ENCODE measurements at regions of chr11 and their contacts with region 1.

Region 1: GRCh38 chr11:63838678-63839507 is at the start of gene MARK2:
- DNase-seq: peak; percentile 97 to 99 (median 99)
- H3K4me3 ChIP-seq: peak within 1 kb of the TSS; percentile 68 to 96 (median 90)
- H3K27ac ChIP-seq: peak within 1 kb of the TSS; percentile 83 to 91
- H3K4me1 ChIP-seq: peaks cover 23 to 52% (median 40%) of the 10 kb centered on the region in 4 experiments
- H3K27me3 ChIP-seq: no peaks in the 10 kb centered on the region

Region 2: DNA sequence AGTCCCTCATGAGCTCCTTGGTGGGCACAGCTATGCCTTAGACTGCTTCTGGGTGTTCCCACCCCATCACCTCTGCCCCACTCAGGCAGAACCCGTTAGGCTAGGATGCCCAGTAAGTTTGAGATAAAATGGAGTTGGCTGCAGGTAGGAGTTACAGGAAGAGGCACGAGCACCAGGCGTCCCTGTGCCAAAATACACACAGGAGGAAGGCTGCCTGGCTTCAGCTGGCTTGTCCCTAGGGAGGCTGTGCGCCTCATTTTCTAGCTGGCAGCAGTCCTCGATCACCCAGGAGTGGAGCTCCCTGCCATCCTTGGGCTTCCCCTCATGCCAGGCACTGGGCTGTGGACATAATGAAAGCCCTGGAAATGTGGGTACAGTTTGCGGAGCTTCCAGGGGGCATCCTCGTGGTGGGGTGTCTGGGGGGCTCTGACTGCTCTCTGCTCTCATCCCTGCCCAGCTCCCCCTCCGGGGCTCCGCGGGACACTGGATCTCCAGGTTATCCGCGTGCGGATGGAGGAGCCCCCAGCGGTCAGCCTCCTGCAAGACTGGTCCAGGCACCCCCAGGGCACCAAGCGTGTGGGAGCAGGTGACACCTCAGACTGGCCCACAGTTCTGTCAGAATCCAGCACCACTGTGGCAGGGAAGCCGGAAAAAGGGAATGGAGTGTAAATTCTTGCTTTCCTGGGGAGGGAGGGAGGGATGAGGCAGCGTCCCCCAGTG is 12.3 kb before region 1 on chr11:
- CTCF ChIA-PET with region 1: interaction called, 17 read pairs
- POLR2A ChIA-PET with region 1: interaction called, 3 read pairs
- DNase-seq: no peak
- H3K4me3 ChIP-seq: no peak overlapping the region
- H3K27ac ChIP-seq: no peak overlapping the region
- H3K4me1 ChIP-seq: no peaks in the 10 kb centered on the region
- H3K27me3 ChIP-seq: no peaks in the 10 kb centered on the region

Region 3: DNA sequence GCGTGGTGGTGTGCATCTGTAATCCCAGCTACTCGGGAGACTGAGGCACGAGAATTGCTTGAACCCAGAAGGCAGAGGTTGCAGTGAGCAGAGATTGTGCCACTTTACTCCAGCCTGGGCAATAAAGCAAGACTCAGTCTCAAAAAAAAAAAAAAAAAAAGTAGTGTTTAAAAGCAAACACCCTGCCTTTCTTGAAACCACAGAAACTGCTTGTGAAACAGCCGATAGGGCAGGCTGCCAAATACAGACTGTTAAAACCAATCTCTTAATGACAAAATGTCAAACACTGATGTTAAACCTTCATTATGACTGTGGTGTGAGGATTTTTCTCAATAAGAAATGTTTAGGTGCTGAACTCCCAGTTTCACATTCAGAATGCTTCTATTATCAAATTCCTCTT is 27.3 kb after region 1 on chr11:
- CTCF ChIA-PET with region 1: interaction called, 30 read pairs
- POLR2A ChIA-PET with region 1: interaction called, 3 read pairs
- DNase-seq: peak; percentile 75 to 90 (median 89)
- H3K4me3 ChIP-seq: no peak overlapping the region
- H3K27ac ChIP-seq: no peak overlapping the region
- H3K4me1 ChIP-seq: peaks cover 29 to 77% (median 69%) of the 10 kb centered on the region in 4 experiments
- H3K27me3 ChIP-seq: no peaks in the 10 kb centered on the region

Region 4: GRCh38 chr11:63882555-63883242 is 43.8 kb after region 1 on chr11:
- CTCF ChIA-PET with region 1: interaction called, 71 read pairs
- POLR2A ChIA-PET with region 1: interaction called, 3 read pairs
- DNase-seq: peak; percentile 91 to 98 (median 97)
- H3K4me3 ChIP-seq: peak overlapping the region in 2 of 7 experiments; percentile 14 to 16
- H3K27ac ChIP-seq: peak overlapping the region in 1 of 2 experiments; percentile 55
- H3K4me1 ChIP-seq: peaks cover 15 to 73% (median 57%) of the 10 kb centered on the region in 4 experiments
- H3K27me3 ChIP-seq: no peaks in the 10 kb centered on the region

Region 5: DNA sequence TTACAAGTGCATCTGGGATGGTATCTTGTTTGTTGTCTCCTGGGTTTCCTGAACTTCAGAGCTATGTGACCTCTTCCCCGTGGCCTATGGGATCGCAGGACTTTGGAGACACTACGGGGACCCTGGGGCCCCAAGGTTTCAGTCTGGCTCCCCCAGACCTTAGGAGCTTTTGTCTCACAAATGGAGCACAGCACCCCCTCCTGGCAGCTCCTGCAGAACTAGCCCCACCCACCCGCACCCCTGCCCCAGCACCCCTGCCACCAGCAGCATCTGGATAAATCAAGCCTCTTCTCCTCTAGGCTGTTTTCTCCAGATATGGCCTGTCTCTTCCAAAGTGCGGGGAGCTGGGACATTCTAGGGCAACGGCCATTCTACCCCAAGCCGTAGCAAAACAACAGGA is 67.7 kb after region 1 on chr11:
- CTCF ChIA-PET with region 1: interaction called, 176 read pairs
- POLR2A ChIA-PET with region 1: no interaction called
- DNase-seq: peak; percentile 51 to 71 (median 67)
- H3K4me3 ChIP-seq: no peak overlapping the region
- H3K27ac ChIP-seq: no peak overlapping the region
- H3K4me1 ChIP-seq: peaks cover 0 to 37% (median 21%) of the 10 kb centered on the region in 4 experiments
- H3K27me3 ChIP-seq: no peaks in the 10 kb centered on the region

Region 6: DNA sequence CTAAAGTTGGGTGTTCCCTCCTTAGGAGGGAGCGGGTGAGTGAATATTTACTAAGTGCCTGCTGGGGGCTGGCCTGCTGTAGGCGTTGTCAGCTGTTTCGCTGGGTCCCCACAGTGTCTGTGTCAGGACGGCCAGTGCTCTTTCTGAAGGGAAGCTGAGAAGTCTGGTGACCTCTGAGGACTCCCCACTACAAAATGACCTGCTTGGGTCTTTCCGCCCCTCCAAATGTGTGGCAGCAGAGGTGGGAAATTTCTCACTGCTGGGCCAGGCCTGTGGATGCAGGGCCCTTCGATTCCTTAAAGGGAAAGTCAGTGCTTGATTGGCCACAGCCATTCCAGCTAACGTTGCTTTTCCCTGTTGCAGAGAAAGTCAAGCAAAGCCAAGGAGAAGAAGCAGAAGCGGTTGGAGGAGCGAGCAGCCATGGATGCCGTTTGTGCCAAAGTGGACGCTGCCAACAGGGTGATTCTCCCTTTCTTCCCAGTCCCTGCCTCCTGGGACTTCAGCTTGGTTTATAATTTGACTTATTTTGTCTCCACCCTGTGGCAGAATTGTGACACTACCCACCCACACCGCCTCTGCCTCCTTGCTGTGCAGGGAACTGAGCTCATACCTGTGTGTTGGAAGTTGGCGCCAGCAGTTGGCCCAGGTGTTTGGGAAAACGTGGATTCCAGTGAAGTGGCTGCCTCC is 106.7 kb after region 1 on chr11:
- CTCF ChIA-PET with region 1: interaction called, 80 read pairs
- POLR2A ChIA-PET with region 1: interaction called, 3 read pairs
- DNase-seq: peak in 2 of 3 donors; percentile 64 to 69
- H3K4me3 ChIP-seq: no peak overlapping the region
- H3K27ac ChIP-seq: no peak overlapping the region
- H3K4me1 ChIP-seq: peaks cover 1 to 8% (median 6%) of the 10 kb centered on the region in 4 experiments
- H3K27me3 ChIP-seq: no peaks in the 10 kb centered on the region

Region 7: DNA sequence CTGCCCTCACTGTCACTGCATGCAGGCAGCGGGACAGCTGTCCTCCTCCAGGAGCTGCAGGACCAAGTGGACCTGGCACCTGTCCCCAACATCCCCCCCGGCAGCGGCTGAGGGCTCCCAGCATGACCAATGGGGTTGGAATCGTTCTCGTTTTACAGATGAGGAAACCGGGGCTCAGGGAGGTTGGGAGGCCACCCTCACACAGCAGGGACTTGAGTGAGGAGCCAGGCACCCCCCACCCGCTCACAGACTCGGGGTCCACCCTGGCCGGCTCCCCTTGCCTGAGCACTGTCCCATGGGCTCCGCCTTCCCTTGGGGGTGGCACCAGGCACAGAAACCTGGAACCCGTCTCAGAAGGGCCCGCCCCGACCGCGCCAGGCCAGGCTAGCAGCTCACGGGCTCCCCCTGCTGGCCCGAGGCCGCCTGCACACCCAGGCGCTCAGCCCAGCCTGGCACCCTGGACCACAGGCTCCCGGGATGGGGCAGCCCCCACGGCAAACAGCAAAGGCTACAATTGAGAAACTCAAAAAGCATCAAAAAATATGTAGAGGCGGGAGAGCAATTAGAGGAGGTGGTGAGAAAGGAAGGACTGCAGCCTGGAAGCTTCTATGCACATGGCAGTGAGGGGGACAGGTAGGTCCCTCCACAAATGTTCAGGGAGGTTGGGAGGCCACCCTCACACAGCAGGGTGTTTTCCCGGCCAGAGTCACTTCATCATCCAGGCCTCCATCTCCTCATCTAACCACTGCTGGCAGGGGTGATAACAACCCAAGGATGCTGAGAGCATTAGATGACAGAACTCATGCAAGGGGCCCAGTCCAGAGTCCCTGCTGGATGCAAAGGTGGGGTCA is 314.2 kb after region 1 on chr11:
- CTCF ChIA-PET with region 1: interaction called, 10 read pairs
- POLR2A ChIA-PET with region 1: no interaction called
- DNase-seq: peak; percentile 31 to 61 (median 51)
- H3K4me3 ChIP-seq: no peak overlapping the region
- H3K27ac ChIP-seq: no peak overlapping the region
- H3K4me1 ChIP-seq: peaks cover 0 to 11% (median 4%) of the 10 kb centered on the region in 4 experiments
- H3K27me3 ChIP-seq: peaks cover 0 to 2% (median 0%) of the 10 kb centered on the region in 5 experiments

Region 8: GRCh38 chr11:64216879-64217278 is 378.0 kb after region 1 on chr11:
- CTCF ChIA-PET with region 1: no interaction called
- POLR2A ChIA-PET with region 1: no interaction called
- DNase-seq: peak; percentile 29 to 57 (median 56)
- H3K4me3 ChIP-seq: no peak overlapping the region
- H3K27ac ChIP-seq: no peak overlapping the region
- H3K4me1 ChIP-seq: no peaks in the 10 kb centered on the region
- H3K27me3 ChIP-seq: no peaks in the 10 kb centered on the region

Measured in common myeloid progenitor, CD34-positive (primary cell).